Dorsolateral prefrontal cortex (tissue), 120 donors: ENCODE measurements at regions of chr7 and their contacts with region 1.

Region 1: GRCh38 chr7:1065263-1066260 is 21.2 kb downstream of the GPR146 start:
- DNase-seq: peak; percentile 77 to 90 (median 85)
- H3K4me3 ChIP-seq: peak overlapping the region in 54 of 59 donors; percentile 6 to 64 (median 42)
- H3K27ac ChIP-seq: peak overlapping the region in 4 of 59 donors; percentile 52 to 73 (median 68)
- H3K27me3 ChIP-seq: no peaks in the 10 kb centered on the region
- CTCF ChIP-seq: peak; percentile 48 to 98 (median 94)

Region 2: DNA sequence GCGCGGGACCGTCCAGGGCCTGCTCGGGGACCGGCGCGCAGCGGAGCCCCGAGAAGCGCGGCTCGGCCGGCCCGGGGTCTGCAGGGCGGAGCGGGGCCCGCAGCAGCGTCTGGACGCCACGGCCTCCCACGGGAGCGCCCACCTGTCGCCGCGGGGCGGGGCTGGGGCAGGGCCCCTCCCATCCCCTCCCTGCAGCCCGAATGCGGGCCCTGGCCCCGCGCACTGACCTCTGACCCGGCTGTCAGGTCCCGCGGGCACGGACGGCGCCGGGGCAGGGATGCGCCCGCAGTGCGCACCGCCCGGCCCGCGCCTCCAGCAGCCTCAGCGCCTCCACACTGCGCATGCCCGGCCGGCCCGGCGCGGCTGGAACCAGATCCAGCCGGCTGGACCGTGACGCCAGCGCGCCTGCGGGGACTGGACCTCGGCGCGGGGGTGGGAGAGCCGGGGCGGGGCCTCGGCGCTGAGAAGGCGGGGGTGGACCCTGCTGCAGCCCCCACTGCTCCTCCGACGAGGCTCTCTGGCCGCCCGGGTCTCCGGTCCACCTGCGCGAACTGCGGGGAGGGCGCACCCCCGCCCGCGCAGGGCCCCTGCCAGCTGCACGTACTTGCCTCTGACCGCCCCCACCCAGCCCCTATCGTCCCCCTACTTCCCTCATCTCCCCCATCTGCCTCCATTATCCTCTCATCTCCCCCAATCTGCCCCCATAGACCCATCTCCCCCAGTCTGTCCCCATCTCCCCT is 37.4 kb before region 1 on chr7:
- intact Hi-C with region 1: loop called in 1 of 2 experiments (anchors 2 kb)
- DNase-seq: peak; percentile 69 to 95 (median 86)
- H3K4me3 ChIP-seq: peak overlapping the region; percentile 64 to 97 (median 83)
- H3K27ac ChIP-seq: peak overlapping the region; percentile 74 to 99 (median 94)
- H3K27me3 ChIP-seq: no peaks in the 10 kb centered on the region
- CTCF ChIP-seq: peak in 13 of 56 donors; percentile 2 to 32 (median 19)

Region 3: GRCh38 chr7:2321020-2321419 is 1255.5 kb after region 1 on chr7:
- intact Hi-C with region 1: no loop called
- DNase-seq: peak in 4 of 10 donors; percentile 11 to 38 (median 28)
- H3K4me3 ChIP-seq: peak overlapping the region in 10 of 59 donors; percentile 6 to 35 (median 28)
- H3K27ac ChIP-seq: no peak overlapping the region
- H3K27me3 ChIP-seq: no peaks in the 10 kb centered on the region
- CTCF ChIP-seq: peak in 5 of 56 donors; percentile 14 to 34 (median 15)